Heart right ventricle (tissue), 16 donors: ENCODE measurements at regions of chr19 and their contacts with region 1.

Region 1: GRCh38 chr19:48899781-48900476 is at the start of gene NUCB1:
- DNase-seq: peak; percentile 98 to 100
- ATAC-seq: peak; percentile 96 to 98 (median 98)
- H3K4me3 ChIP-seq: peak within 1 kb of the TSS; percentile 67 to 98 (median 88)
- H3K27ac ChIP-seq: peak within 1 kb of the TSS; percentile 74 to 98 (median 94)
- H3K4me1 ChIP-seq: peaks cover 10 to 51% (median 45%) of the 10 kb centered on the region in 9 donors
- H3K27me3 ChIP-seq: peaks cover 0 to 18% (median 0%) of the 10 kb centered on the region in 7 donors
- CTCF ChIP-seq: peak in 6 of 9 donors; percentile 14 to 53 (median 37)
- total RNA-seq, gene NUCB1: 227 to 452 (median 311) TPM

Region 2: GRCh38 chr19:48618916-48619691 is 280.8 kb before region 1 on chr19 and contains the starts of genes RPL18 and SPHK2:
- intact Hi-C with region 1: no loop called
- DNase-seq: peak; percentile 97 to 98
- ATAC-seq: peak; percentile 90 to 95 (median 93)
- H3K4me3 ChIP-seq: peak within 1 kb of the TSS; percentile 74 to 95 (median 81)
- H3K27ac ChIP-seq: peak within 1 kb of the TSS; percentile 64 to 93 (median 88)
- H3K4me1 ChIP-seq: peaks cover 18 to 60% (median 37%) of the 10 kb centered on the region in 9 donors
- H3K27me3 ChIP-seq: no peaks in the 10 kb centered on the region
- CTCF ChIP-seq: peak in 1 of 9 donors; percentile 9
- total RNA-seq, gene RPL18: 493 to 753 (median 543) TPM
- total RNA-seq, gene SPHK2: 5.7 to 13.0 (median 7.7) TPM

Region 3: GRCh38 chr19:48872182-48872883 is 27.6 kb before region 1 on chr19 and contains the start of gene PPP1R15A:
- intact Hi-C with region 1: loop called in 2 of 10 experiments (anchors 2 kb)
- DNase-seq: peak; percentile 98
- ATAC-seq: peak; percentile 59 to 88 (median 78)
- H3K4me3 ChIP-seq: peak within 1 kb of the TSS; percentile 69 to 100 (median 92)
- H3K27ac ChIP-seq: peak within 1 kb of the TSS; percentile 96 to 100 (median 100)
- H3K4me1 ChIP-seq: peaks cover 7 to 62% (median 53%) of the 10 kb centered on the region in 9 donors
- H3K27me3 ChIP-seq: no peaks in the 10 kb centered on the region
- CTCF ChIP-seq: peak in 2 of 9 donors; percentile 10 to 19
- total RNA-seq, gene PPP1R15A: 55.4 to 123 (median 73.7) TPM

Region 4: DNA sequence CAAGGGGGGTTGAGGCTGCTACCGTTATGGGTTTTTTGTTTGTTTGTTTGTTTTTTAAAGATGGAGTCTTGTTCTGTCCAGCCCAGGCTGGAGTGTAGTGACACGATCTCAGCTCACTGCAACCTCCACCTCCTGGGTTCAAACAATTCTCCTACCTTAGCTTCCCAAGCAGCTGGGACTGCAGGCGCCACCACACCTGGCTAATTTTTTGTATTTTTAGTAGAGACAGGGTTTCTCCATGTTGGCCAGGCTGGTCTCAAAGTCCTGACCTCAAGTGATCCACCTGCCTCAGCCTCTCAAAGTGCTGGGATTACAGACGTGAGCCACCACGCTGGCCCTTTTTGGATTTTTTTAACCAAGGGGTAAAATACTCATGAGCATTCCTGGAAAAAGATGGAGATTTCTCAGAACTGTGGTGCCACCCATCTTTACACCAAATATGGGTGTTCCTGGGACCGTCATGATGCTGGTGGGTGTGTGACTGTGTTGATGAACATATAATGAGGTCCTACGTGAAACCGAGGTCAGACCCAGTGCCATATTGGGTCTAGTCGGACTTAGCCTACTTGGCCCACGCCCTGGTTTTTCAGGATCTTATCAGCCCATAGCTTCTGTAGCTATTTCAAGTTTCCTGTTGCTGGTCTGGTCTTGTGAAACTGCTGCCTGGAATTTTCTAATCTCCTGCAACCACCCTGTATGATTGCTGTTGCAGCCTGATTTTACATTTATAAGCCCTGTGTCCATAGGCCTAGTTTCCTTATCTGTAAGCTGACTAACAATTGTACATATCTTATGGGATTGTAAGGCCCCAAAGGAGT is 21.5 kb before region 1 on chr19:
- intact Hi-C with region 1: loop called in 3 of 10 experiments (anchors 2 kb)
- DNase-seq: peak in 1 of 2 donors; percentile 75
- ATAC-seq: peak; percentile 13 to 67 (median 59)
- H3K4me3 ChIP-seq: no peak overlapping the region
- H3K27ac ChIP-seq: peak overlapping the region; percentile 35 to 100 (median 100)
- H3K4me1 ChIP-seq: peaks cover 4 to 73% (median 62%) of the 10 kb centered on the region in 9 donors
- H3K27me3 ChIP-seq: no peaks in the 10 kb centered on the region
- CTCF ChIP-seq: no peak

Region 5: DNA sequence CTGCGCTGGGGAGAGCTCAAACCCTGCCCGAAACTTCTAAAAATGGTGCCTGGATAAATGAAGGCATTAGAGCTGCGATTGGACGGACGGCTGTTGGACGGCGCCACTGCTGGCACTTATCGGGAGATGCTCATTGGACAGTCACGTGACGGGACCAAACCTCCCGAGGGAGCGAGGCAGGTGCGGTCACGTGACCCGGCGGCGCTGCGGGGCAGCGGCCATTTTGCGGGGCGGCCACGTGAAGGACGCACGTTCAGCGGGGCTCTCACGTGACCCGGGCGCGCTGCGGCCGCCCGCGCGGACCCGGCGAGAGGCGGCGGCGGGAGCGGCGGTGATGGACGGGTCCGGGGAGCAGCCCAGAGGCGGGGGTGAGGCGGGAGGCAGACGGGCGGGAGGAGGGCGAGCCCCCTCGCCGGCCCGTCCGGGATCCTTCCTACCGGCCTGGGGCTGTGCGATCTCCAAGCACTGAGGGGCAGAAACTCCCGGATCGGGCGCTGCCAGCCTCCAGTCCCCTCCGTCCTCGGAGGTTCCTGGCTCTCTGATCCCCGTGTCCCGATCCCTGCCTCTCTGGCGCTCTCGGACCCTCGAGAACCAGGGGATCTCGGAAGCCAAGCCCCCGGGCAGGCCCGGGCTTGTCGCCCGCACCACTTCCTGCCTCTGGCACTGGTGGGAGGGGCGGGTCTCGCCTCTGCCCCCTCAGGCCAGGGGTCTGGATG is 54.8 kb after region 1 on chr19 and contains the start of gene BAX:
- intact Hi-C with region 1: loop called in 4 of 10 experiments (anchors 5 kb)
- DNase-seq: peak; percentile 96 to 98
- ATAC-seq: peak; percentile 91 to 97 (median 94)
- H3K4me3 ChIP-seq: peak within 1 kb of the TSS; percentile 76 to 98 (median 88)
- H3K27ac ChIP-seq: peak within 1 kb of the TSS; percentile 57 to 96 (median 88)
- H3K4me1 ChIP-seq: peaks cover 5 to 33% (median 19%) of the 10 kb centered on the region in 9 donors
- H3K27me3 ChIP-seq: no peaks in the 10 kb centered on the region
- CTCF ChIP-seq: peak in 1 of 9 donors; percentile 10
- total RNA-seq, gene BAX: 11.5 to 41.5 (median 19.5) TPM

Region 6: GRCh38 chr19:48965040-48965805 is 65.3 kb after region 1 on chr19 and contains the start of gene FTL:
- intact Hi-C with region 1: loop called in 1 of 10 experiments (anchors 1 kb)
- DNase-seq: peak; percentile 98
- ATAC-seq: peak; percentile 84 to 94 (median 91)
- H3K4me3 ChIP-seq: peak within 1 kb of the TSS; percentile 65 to 100 (median 88)
- H3K27ac ChIP-seq: peak within 1 kb of the TSS; percentile 84 to 96 (median 89)
- H3K4me1 ChIP-seq: peaks cover 15 to 62% (median 55%) of the 10 kb centered on the region in 9 donors
- H3K27me3 ChIP-seq: no peaks in the 10 kb centered on the region
- CTCF ChIP-seq: no peak
- total RNA-seq, gene FTL: 450 to 3,518 (median 637) TPM